HEK293 (cell line): ENCODE measurements at regions of chr14 and their contacts with region 1.

Region 1: GRCh38 chr14:90399541-90400444 is 3.0 kb downstream of the CALM1 start:
- H3K4me3 ChIP-seq: no peak overlapping the region; the same call in 1 of the 2 replicates
- H3K27ac ChIP-seq: no peak overlapping the region
- H3K4me1 ChIP-seq: peaks cover 5% of the 10 kb centered on the region; the same call in 1 of the 2 replicates
- CTCF ChIP-seq: peak; percentile 99

Region 2: GRCh38 chr14:90383075-90383730 is 16.6 kb before region 1 on chr14:
- CTCF ChIA-PET with region 1: interaction called, 4 read pairs
- POLR2A ChIA-PET with region 1: interaction called, 49 read pairs
- H3K4me3 ChIP-seq: peak overlapping the region; percentile 70
- H3K27ac ChIP-seq: peak overlapping the region; percentile 93
- H3K4me1 ChIP-seq: peaks cover 16% of the 10 kb centered on the region
- CTCF ChIP-seq: peak; percentile 99

Region 3: GRCh38 chr14:90419200-90419599 is 19.4 kb after region 1 on chr14:
- CTCF ChIA-PET with region 1: interaction called, 10 read pairs
- POLR2A ChIA-PET with region 1: interaction called, 6 read pairs
- H3K4me3 ChIP-seq: no peak overlapping the region
- H3K27ac ChIP-seq: no peak overlapping the region
- H3K4me1 ChIP-seq: peaks cover 8% of the 10 kb centered on the region
- CTCF ChIP-seq: no peak

Region 4: DNA sequence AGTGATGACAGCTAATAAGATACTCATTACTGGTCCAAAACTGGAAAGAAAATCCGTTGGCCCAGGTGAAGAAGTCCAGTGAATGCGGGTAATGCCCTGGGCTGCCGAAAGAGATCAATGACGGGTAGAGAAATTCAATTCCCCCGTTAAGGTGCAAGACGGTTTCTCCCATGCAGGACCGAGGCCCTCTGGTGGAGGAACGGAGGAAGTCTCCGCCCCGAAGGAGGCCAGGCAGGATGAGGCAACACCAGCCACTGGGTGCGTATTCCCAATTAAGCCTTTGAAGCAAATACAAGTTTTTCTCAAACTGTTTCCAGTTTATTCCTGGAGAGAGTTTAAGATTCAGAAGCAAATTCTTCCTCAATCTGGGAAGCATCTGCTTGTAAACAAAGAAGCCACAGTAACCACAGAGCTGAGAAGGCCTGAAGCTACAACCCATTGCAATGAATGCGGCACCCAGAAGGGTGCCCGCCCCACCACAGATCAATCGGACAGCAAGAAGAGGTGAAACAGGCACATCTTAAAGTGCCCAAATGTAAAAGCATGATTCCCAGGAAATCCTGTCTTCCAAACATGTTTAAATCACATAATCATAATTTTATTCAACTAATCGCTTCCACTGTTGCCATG is 297.9 kb after region 1 on chr14:
- CTCF ChIA-PET with region 1: interaction called, 28 read pairs
- POLR2A ChIA-PET with region 1: interaction called, 4 read pairs
- H3K4me3 ChIP-seq: no peak overlapping the region
- H3K27ac ChIP-seq: no peak overlapping the region
- H3K4me1 ChIP-seq: peaks cover 12% of the 10 kb centered on the region
- CTCF ChIP-seq: peak; percentile 90

Region 5: DNA sequence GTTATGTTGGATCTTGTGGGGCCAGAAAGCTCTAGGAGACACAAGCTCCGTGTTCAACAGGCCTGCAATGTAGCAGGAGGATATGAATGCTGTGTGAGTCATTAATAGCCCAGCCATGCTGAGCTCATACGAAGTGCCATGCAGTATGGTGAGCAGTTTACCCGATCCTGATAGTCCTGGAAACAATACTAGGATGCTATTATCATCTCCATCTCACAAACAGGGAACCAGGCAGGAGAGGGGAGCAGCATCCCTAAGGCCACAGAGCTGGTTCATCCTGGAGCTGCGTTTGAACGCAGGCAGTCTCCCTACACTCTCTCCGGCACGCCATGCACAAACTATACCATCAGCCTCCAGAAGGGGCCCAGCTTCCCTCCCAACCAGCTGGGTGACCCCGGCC is 396.0 kb after region 1 on chr14:
- CTCF ChIA-PET with region 1: no interaction called
- POLR2A ChIA-PET with region 1: no interaction called
- H3K4me3 ChIP-seq: no peak overlapping the region
- H3K27ac ChIP-seq: no peak overlapping the region
- H3K4me1 ChIP-seq: no peaks in the 10 kb centered on the region
- CTCF ChIP-seq: no peak